HEK293T (cell line): ENCODE measurements at regions of chr12 and their contacts with region 1.

Region 1: GRCh38 chr12:57611108-57611809 is at the start of gene ARHGEF25:
- DNase-seq: peak; percentile 91

Region 2: DNA sequence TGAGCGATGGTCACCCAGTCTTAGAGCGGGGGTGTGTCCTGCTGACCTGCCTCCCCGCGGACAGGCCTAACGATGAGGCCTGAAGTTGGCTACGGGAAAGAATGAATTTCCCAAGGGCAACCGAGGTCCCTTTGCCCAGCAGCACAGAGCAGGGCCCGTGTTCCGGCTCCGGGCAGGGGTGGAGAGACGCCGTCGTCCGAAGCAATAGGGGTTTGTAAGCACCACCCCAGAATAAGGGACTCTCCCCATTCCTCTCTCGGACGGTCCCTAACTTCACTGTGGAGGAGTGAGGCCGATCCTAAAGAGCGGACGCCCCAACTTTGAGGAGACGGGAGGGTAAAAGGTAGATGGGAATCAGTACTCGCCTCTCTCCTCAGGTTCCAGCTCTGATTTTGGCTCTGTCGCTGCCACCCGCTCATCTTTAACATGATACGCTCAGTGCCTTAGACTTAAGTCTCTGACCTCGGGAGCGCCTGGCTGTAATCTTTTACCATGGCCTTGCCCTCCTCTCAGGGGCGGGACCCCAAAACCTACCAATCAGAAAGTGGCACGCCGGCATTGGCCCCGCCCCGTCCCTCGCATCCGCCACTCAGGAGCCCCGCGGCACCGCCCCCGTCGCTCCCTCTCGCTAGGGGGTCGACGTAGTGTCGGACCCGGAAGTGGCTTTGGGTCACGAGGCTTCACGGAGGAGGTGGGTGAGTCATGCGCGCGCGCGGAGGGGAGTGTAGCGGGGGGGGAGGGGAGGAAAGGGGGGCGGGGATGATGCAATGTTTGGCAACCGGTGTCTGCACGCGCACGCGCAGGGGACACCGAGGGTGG is 91.0 kb before region 1 on chr12 and contains the start of gene DDIT3:
- CTCF ChIA-PET with region 1: no interaction called
- POLR2A ChIA-PET with region 1: no interaction called
- DNase-seq: peak; percentile 95

Region 3: DNA sequence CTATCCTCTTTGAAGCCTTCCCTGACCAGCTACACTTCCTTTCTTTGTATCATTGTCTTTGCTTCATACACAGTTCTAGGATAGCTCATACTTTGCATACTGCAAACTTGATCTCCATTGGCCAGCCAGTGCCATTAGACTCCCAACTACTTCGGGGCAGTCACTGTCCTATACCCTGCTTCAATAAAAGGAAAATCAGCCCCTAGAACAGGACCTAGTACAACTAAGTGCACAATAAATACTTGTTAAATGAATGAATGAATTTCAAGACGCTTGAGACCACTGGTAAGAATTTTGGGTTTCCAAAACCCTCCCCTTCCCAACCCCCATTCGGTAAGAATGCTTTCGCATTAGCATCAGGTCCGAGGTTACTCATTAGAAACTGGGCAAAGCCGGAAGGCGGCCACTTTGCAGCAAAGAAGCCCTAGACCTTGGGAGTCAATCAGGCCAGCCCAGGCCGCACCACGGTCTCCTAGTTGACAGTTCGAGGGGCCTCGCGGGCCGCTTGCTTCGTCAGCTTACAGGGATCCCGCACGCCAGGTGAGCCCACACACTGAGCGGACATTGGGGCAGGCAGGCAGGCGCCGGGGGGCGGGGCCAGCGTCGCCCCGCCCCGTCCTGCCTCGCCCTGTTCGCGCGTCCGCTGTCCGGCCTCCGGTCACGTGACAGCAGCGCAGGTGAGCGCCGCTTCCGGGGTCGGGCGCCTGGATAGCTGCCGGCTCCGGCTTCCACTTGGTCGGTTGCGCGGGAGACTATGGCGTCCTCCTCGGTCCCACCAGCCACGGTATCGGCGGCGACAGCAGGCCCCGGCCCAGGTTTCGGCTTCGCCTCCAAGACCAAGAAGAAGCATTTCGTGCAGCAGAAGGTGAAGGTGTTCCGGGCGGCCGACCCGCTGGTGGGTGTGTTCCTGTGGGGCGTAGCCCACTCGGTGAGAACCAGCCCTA is 20.5 kb before region 1 on chr12 and contains the start of gene PIP4K2C:
- CTCF ChIA-PET with region 1: interaction called, 3 read pairs
- POLR2A ChIA-PET with region 1: interaction called, 41 read pairs
- DNase-seq: peak; percentile 94